ENCODE measurements at regions of chr10 and their contacts with region 1.

Region 1: GRCh38 chr10:9302120-9302746 is 1247.7 kb downstream of the GATA3 start:
- DNase-seq: peak; percentile 47
- H3K4me3 ChIP-seq: no peak overlapping the region
- H3K27ac ChIP-seq: no peak overlapping the region
- H3K4me1 ChIP-seq: no peaks in the 10 kb centered on the region
- H3K27me3 ChIP-seq: no peaks in the 10 kb centered on the region
- CTCF ChIP-seq: peak; percentile 26 to 35

Region 2: DNA sequence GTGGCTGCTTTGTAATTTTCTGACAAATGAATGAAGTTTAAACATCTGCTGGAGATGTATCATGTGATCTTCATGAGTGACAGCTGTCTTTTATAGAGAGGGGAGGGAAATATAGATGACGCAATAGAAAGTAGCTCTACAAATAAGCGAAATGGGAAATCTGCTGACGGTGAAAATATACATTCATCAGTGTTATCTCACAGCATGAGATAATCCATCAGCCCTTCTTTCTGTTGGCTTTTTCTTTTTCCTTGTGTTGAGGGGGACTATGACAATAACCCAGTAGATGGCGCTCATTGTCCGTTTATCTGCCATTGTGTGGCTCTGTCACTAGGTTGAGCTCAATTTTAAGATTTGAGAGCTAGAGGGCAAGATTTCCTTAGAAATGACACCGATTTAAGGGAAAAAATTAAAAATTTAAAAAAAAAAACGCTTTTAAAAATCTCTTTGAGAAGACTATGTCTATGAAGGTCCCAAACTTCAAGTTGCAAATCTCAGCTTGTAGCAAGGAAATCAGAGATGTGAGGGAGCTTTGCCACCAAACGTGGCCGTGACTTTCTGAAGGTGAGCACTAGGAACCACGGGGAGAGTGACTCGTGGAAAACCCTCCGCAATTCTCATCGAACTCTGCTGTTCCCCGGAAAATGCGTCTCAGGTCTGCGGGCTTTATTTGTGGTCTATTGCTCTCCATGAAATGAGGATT is 1776.8 kb before region 1 on chr10:
- CTCF ChIA-PET with region 1: interaction called, 3 read pairs
- dilution Hi-C with region 1: no loop called
- in situ Hi-C with region 1: loop called (anchors 5 to 10 kb)
- intact Hi-C with region 1: loop called (anchors 1 kb)
- DNase-seq: peak; percentile 38
- H3K4me3 ChIP-seq: no peak overlapping the region
- H3K27ac ChIP-seq: no peak overlapping the region
- H3K4me1 ChIP-seq: no peaks in the 10 kb centered on the region
- H3K27me3 ChIP-seq: no peaks in the 10 kb centered on the region
- CTCF ChIP-seq: peak; percentile 65 to 72

Region 3: DNA sequence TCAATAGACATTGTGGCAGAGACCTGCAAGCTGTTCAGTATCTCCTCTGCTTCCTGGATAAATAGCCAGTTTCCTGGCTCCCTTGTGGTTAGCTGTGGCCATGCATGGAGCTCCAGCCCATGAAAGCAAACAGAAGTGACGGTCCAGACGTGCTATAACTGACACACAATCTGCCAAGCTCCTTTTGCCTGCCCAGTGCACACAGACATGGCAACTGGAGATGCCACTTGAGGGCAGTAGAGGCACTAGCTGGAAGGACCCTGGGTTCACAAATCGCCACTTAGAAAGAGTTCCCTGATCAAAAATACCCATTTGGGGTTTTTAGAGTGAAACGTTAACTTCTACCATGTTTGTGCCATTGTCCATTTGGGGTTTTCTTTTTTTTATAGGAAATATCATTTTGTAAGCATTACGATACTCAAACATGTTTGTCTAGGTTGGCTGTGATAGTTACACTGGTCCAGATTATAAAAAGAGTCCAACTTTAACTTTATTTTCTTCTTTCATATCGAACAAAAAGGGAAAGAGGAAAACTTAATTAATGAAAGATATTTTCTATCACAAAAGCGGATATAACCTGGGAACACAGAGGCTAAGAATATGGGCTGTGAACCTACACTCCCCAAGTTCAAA is 1545.8 kb before region 1 on chr10:
- CTCF ChIA-PET with region 1: no interaction called
- dilution Hi-C with region 1: no loop called
- in situ Hi-C with region 1: no loop called
- intact Hi-C with region 1: loop called (anchors 5 kb)
- DNase-seq: peak; percentile 14
- H3K4me3 ChIP-seq: no peak overlapping the region
- H3K27ac ChIP-seq: no peak overlapping the region
- H3K4me1 ChIP-seq: no peaks in the 10 kb centered on the region
- H3K27me3 ChIP-seq: no peaks in the 10 kb centered on the region
- CTCF ChIP-seq: peak; percentile 30 to 57

Region 4: DNA sequence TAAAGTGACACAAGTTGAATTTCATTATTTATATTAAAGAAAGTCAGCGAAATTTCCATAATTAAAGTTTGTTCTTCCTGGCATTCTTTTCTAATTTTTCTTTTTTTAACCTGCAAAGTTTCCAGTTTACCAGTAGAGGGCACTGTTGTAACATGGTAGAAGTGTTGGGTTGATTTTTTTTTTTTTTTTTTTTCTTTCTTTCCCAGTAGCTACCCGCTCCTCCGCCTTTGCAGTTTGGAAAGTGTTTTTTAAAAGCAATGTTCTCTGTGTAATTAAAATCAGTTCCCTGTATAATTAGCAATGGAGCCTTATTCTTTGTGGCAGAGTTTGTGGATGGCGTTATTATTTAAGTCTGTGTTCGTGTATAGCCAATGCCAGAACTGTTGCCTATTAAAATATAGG is 1430.2 kb before region 1 on chr10:
- CTCF ChIA-PET with region 1: no interaction called
- dilution Hi-C with region 1: no loop called
- in situ Hi-C with region 1: loop called in 1 of 2 experiments (anchors 25 kb)
- intact Hi-C with region 1: loop called (anchors 1 kb)
- DNase-seq: peak; percentile 27
- H3K4me3 ChIP-seq: peak overlapping the region; percentile 47 to 78 (median 47)
- H3K27ac ChIP-seq: no peak overlapping the region
- H3K4me1 ChIP-seq: no peaks in the 10 kb centered on the region
- H3K27me3 ChIP-seq: no peaks in the 10 kb centered on the region
- CTCF ChIP-seq: peak; percentile 51 to 69

Region 5: DNA sequence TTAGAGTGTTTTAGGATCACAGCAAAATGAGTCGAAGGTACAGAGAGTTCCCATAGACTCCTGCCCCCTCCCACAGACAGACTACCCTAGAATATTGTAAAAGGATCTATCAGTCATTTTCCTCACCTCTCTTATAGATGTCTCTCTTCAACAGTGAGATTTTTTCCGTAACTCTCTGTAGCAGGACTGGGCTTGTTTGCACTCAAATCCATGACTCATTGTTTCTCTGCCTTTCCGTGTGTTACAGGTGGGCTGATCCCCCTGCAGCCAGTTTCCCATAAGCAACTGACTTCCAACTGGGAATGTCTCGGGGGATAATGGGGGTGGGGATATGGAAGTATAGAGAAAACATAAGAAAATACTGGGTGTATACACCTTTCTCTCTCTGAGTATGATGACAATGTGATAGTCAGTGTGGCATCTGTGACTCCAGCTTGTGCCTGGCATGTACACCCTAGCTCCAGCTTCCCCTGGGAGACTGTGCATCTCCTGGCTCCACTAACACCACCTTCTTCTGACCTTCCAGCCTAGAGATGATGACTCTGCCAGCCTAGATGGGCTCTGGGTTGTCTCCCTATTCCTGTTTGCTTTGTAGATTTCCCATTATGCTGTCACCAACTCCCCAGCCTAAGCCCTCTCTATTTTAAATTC is 326.6 kb before region 1 on chr10:
- CTCF ChIA-PET with region 1: no interaction called
- dilution Hi-C with region 1: no loop called
- in situ Hi-C with region 1: no loop called
- intact Hi-C with region 1: loop called (anchors 10 kb)
- DNase-seq: peak; percentile 66
- H3K4me3 ChIP-seq: no peak overlapping the region
- H3K27ac ChIP-seq: no peak overlapping the region
- H3K4me1 ChIP-seq: peaks cover 4% of the 10 kb centered on the region
- H3K27me3 ChIP-seq: no peaks in the 10 kb centered on the region
- CTCF ChIP-seq: no peak

Region 6: DNA sequence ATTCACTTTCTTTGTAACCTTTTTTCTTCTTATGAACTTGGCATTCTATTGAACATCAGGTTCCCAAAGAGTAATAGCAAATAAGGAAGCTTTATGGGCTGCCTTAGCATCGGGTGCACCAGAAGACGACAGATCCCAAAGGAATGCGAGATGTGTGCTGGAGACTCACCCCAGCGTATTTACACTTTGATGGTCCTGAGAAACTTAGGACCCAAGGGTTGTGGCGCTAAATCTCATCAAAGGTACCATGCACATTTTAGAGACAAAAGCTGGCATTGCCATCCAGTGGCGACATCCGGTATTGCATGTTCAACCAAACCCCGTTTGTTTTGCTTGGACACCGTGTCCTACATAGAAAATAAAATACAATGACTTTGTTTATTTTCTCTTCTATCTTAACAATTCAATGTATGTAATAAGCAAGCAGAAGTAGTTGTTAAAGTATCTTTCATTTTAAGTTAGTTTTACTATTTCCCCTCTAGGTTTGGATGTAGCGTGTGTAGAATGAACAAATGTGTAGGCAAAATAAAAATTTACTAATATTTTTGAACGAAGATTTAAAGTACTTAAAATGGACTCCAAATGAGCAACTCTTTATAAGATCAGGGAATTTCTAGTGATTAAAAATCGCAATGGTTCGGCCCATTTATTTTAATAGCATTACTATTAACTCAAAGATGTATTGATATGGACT is 93.0 kb before region 1 on chr10:
- CTCF ChIA-PET with region 1: no interaction called
- dilution Hi-C with region 1: no loop called
- in situ Hi-C with region 1: no loop called
- intact Hi-C with region 1: loop called (anchors 2 kb)
- DNase-seq: peak; percentile 46
- H3K4me3 ChIP-seq: no peak overlapping the region
- H3K27ac ChIP-seq: no peak overlapping the region
- H3K4me1 ChIP-seq: no peaks in the 10 kb centered on the region
- H3K27me3 ChIP-seq: no peaks in the 10 kb centered on the region
- CTCF ChIP-seq: peak; percentile 90

Region 7: GRCh38 chr10:9228771-9229170 is 73.5 kb before region 1 on chr10:
- CTCF ChIA-PET with region 1: no interaction called
- dilution Hi-C with region 1: no loop called
- in situ Hi-C with region 1: no loop called
- intact Hi-C with region 1: no loop called
- DNase-seq: peak; percentile 40
- H3K4me3 ChIP-seq: no peak overlapping the region
- H3K27ac ChIP-seq: no peak overlapping the region
- H3K4me1 ChIP-seq: no peaks in the 10 kb centered on the region
- H3K27me3 ChIP-seq: no peaks in the 10 kb centered on the region
- CTCF ChIP-seq: no peak